Astrocyte of the cerebellum (primary cell): ENCODE measurements at regions of chr2 and their contacts with region 1.

Region 1: DNA sequence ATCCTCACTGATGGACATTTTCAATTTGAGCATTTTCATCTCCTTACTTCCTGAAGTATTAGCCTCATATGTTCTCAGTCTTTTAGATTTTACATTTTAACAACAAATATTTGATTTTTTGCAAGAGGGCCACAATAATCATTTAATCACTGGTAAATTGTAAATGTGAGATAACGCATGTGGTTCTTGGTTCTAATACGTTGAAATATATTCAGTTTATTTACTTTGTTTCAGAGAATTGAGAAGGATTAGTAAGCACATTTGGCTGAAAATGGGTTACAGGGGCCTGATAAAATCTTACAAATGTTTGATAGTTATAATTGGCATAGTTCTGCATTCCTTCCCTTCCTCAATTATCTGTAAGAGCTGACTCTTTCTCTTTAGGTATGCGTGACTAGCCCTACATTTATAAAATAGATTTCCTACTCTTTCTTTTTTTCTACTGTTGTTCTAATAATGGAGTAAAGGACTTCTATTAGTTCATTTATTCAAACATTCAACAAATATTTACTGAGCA is 685.1 kb downstream of the NUP35 start:
- DNase-seq: no peak
- H3K4me3 ChIP-seq: no peak overlapping the region
- CTCF ChIP-seq: no peak

Region 2: DNA sequence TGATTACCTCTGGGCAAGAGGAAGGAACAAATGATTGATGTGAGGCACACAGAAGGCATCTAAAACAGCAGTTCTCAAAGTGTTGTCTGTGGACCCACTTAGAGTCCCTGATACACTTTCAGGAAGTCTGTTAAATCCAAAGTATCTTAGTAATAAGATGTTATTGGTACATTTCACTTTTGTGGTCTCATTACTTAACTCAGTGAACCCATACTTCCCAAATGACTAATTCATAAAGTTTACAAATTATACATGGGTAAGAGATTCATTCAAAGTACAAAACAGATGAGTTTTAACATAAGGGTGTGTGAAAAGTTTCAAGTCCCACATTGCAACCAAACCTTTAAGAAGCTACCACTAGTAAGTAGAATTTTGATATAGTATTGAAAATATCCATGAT is 244.6 kb before region 1 on chr2:
- in situ Hi-C with region 1: no loop called
- DNase-seq: peak; percentile 2
- H3K4me3 ChIP-seq: no peak overlapping the region
- CTCF ChIP-seq: no peak

Region 3: DNA sequence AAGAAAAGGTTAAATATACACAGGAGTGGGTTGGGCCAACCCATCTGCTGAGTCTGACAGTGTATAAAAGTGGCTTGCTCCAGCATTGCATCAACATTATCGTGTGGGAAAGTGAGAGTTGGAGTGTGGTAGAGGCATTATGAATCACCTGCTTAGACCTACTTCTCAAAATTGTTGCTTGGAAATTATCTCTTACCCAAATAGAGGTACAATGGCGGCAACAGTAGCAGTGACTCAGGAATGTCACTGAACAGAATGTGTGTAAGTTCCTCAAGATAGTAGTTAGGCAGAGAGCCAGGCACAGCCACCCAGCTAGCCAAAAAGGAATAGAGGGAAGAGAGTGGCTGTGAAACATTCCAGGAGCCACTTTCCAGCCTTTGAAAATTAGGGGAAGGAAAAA is 69.1 kb before region 1 on chr2:
- in situ Hi-C with region 1: loop called (anchors 5 kb)
- DNase-seq: no peak
- H3K4me3 ChIP-seq: no peak overlapping the region
- CTCF ChIP-seq: no peak

Region 4: DNA sequence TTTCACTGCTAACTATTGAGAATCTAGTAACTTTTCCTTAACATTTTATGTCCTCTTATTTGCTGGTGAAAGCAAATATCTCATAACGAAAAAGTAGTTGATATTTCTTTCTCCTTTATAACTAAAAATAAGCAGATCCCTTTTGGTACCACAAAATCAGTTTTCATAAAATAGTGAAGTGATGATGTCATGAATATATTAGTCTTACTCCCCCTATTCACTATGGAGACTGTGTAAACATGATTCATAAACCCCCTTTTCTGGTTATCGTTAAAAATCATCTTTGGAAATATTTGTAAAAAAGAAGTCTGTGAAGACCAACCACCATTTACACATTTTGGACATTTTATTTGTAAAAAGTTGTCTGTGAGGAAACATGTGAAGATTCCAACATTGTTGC is 49.8 kb after region 1 on chr2:
- in situ Hi-C with region 1: no loop called
- DNase-seq: no peak
- H3K4me3 ChIP-seq: no peak overlapping the region
- CTCF ChIP-seq: no peak

Region 5: GRCh38 chr2:184041077-184041476 is 231.7 kb after region 1 on chr2:
- in situ Hi-C with region 1: no loop called
- DNase-seq: no peak
- H3K4me3 ChIP-seq: no peak overlapping the region
- CTCF ChIP-seq: no peak